ENCODE measurements at regions of chr4 and their contacts with region 1.

Region 1: DNA sequence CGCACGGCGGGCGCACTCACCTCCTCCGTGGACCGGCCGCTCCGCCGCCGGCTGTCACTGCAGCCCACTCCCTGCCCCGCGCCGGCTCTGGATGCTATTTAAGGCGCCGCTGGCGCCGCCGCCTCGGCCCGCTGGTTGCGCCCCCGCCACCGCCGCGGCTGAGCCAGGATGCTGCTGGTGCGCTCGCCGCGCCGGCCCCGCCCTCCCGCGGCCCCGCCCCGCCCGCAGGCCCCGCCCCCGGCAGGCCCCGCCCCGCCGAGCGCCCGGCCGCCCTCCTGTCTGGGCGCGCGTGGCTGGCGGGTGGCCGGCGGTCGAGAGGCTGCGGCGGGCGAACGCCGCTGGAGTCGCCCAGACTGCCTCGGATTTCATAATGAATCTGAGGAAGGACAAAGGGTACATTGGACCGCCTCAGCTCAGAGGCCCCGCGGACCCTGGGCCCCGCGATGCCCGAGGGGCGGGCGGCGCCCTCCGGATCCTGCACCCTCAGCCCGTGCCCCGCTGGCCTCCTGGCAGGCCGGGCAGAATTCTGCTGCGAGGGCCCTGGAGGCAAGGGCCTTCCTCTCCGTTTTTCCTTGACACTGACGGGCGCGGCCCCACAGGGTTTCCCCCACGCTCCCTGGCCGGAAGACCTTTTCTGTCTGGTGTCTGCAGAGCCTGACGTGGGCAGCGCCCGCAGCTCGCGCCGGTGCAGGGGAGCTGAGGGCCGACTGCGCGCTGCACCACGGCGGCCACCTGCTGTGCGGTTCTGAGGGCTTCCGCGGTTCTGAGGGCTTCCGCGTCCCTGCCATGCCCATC is at the start of gene ACSL1:
- DNase-seq: peak; percentile 63 to 83 (median 75)
- ATAC-seq: peak; percentile 95
- H3K4me3 ChIP-seq: peak within 1 kb of the TSS; percentile 59
- H3K4me3 Mint-ChIP-seq: peak within 1 kb of the TSS; percentile 89 to 94 (median 91)
- H3K27ac ChIP-seq: peak within 1 kb of the TSS; percentile 73
- H3K27ac Mint-ChIP-seq: peak within 1 kb of the TSS; percentile 79 to 91 (median 90)
- H3K4me1 ChIP-seq: peaks cover 4 to 7% of the 10 kb centered on the region in 2 donors
- H3K4me1 Mint-ChIP-seq: peaks cover 21 to 46% (median 33%) of the 10 kb centered on the region in 7 donors
- H3K27me3 ChIP-seq: no peaks in the 10 kb centered on the region
- H3K27me3 Mint-ChIP-seq: peaks cover 0 to 25% (median 0%) of the 10 kb centered on the region in 5 donors
- total RNA-seq, gene ACSL1: 9.5 to 80.1 (median 20.4) TPM

Region 2: DNA sequence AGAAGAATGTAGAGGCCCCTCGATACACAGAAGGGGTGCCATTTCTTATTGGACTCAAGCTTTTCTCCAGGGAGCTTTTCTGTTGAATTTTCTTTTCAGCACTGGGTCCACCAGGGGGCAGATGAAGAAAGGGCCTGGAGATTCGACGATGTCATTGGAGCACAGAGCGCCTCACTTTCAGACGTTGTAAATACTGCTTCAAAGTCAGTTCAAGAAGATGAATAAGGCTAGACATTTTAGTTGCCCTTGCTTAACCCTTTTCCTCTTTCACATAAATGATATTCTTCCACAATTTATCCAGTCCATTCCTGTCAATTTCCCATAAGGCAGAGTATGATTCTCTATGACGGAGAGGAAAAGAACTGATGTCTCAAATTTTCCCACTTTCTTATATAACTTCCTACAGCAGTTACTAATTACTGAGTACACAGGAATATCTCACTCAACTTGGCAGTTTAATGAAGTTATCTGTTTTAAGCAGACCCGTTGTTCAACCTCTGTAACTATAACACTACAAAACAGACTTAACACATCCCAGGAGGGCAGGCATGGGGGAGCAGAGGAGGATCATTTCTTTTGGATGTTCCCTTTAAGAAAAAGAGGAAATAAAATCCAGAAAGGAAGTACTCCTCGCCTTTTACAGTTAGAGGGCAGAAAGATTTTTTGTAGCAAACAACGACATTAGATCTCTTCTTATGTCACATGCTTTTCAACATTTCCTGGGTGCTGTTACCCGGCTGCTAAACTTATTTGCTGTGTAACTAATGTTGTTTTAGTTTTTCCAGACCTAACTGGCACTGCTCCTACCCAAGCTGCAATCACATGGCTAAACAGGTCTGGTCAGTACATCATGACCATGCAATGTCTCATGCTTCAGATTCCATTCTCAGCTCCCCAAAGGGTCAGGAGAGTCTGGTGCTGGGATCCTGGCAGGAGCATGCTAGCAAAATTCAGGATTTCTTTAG is 80.0 kb before region 1 on chr4:
- CTCF ChIA-PET with region 1: no interaction called
- POLR2A ChIA-PET with region 1: no interaction called
- intact Hi-C with region 1: loop called (anchors 1 to 2 kb)
- DNase-seq: peak; percentile 37 to 82 (median 76)
- ATAC-seq: peak; percentile 93
- H3K4me3 ChIP-seq: no peak overlapping the region
- H3K4me3 Mint-ChIP-seq: peak overlapping the region; percentile 18 to 73 (median 54)
- H3K27ac ChIP-seq: peak overlapping the region; percentile 30
- H3K27ac Mint-ChIP-seq: peak overlapping the region; percentile 58 to 90 (median 88)
- H3K4me1 ChIP-seq: peaks cover 0 to 14% of the 10 kb centered on the region in 2 donors
- H3K4me1 Mint-ChIP-seq: peaks cover 16 to 20% (median 18%) of the 10 kb centered on the region in 7 donors
- H3K27me3 ChIP-seq: no peaks in the 10 kb centered on the region
- H3K27me3 Mint-ChIP-seq: peaks cover 0 to 3% (median 0%) of the 10 kb centered on the region in 5 donors

Region 3: DNA sequence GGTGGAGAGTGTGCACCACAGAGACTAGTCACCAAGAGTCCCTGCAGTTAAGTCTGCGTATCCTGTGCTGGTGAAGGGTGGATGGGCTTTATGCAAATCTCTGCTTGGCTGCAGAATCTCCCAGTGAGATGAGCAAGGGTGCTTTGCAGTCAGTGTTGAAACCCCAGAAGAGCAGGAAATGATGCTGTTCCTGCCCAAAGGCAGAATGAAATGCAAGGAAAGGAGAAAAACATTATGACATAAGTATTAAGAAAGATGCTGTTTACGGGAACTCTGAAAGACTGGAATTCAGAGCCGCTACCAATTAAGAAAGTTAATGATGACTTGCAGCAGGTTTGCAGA is 25.1 kb after region 1 on chr4:
- CTCF ChIA-PET with region 1: no interaction called
- POLR2A ChIA-PET with region 1: no interaction called
- intact Hi-C with region 1: loop called in 1 of 2 experiments (anchors 2 kb)
- DNase-seq: peak in 2 of 9 donors; percentile 0 to 20
- ATAC-seq: peak; percentile 72
- H3K4me3 ChIP-seq: no peak overlapping the region
- H3K4me3 Mint-ChIP-seq: no peak overlapping the region
- H3K27ac ChIP-seq: no peak overlapping the region
- H3K27ac Mint-ChIP-seq: no peak overlapping the region
- H3K4me1 ChIP-seq: peaks cover 0 to 3% of the 10 kb centered on the region in 2 donors
- H3K4me1 Mint-ChIP-seq: peaks cover 10 to 33% (median 13%) of the 10 kb centered on the region in 7 donors
- H3K27me3 ChIP-seq: no peaks in the 10 kb centered on the region
- H3K27me3 Mint-ChIP-seq: peaks cover 0 to 12% (median 0%) of the 10 kb centered on the region in 5 donors

Region 4: DNA sequence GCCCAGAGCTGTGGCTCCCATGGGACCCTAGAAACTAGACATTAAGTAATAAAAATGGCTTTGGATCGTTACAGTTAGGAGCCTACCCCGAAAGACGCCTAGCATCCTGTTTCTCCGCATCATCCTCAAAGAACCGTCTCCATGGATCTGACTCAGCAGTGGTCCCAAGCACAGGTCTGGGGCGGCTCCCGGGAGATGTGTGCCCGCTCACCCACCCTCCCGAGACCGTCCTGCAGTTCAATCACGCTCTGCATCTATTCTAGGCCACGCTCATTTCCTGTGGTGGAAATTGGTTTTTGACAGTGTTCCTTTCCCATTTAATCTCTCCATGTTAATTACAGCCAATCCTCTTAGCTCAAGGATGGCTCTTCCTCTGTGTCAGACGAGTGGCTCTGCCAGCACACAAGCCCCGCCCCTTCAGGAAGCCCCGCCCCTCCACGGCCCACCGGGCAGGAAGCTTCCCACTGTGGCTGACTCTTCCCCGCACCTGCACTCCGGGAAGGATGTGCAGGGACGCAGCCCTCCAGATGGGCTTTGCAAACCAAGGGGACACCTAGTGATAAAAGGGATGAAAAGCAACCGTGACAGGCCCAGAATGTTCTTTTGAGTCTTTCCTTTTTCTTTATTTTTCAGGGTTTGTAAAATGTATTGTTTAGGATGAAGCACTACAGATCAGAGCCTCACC is 157.7 kb after region 1 on chr4:
- CTCF ChIA-PET with region 1: no interaction called
- POLR2A ChIA-PET with region 1: no interaction called
- intact Hi-C with region 1: loop called in 1 of 2 experiments (anchors 2 kb)
- DNase-seq: peak in 6 of 9 donors; percentile 37 to 56 (median 48)
- ATAC-seq: peak; percentile 60
- H3K4me3 ChIP-seq: peak overlapping the region; percentile 50
- H3K4me3 Mint-ChIP-seq: no peak overlapping the region
- H3K27ac ChIP-seq: no peak overlapping the region
- H3K27ac Mint-ChIP-seq: no peak overlapping the region
- H3K4me1 ChIP-seq: peaks cover 15 to 17% of the 10 kb centered on the region in 2 donors
- H3K4me1 Mint-ChIP-seq: peaks cover 0 to 2% (median 0%) of the 10 kb centered on the region in 7 donors
- H3K27me3 ChIP-seq: no peaks in the 10 kb centered on the region
- H3K27me3 Mint-ChIP-seq: peaks cover 0 to 6% (median 0%) of the 10 kb centered on the region in 5 donors

Region 5: GRCh38 chr4:185082561-185082960 is 256.5 kb after region 1 on chr4:
- CTCF ChIA-PET with region 1: no interaction called
- POLR2A ChIA-PET with region 1: no interaction called
- intact Hi-C with region 1: no loop called
- DNase-seq: no peak
- ATAC-seq: no peak
- H3K4me3 ChIP-seq: no peak overlapping the region
- H3K4me3 Mint-ChIP-seq: no peak overlapping the region
- H3K27ac ChIP-seq: no peak overlapping the region
- H3K27ac Mint-ChIP-seq: no peak overlapping the region
- H3K4me1 ChIP-seq: no peaks in the 10 kb centered on the region
- H3K4me1 Mint-ChIP-seq: peaks cover 0 to 2% (median 0%) of the 10 kb centered on the region in 7 donors
- H3K27me3 ChIP-seq: no peaks in the 10 kb centered on the region
- H3K27me3 Mint-ChIP-seq: peaks cover 0 to 41% (median 12%) of the 10 kb centered on the region in 5 donors

Region 6: GRCh38 chr4:185209031-185209851 is 383.1 kb after region 1 on chr4 and contains the start of gene SNX25:
- CTCF ChIA-PET with region 1: no interaction called
- POLR2A ChIA-PET with region 1: no interaction called
- intact Hi-C with region 1: loop called in 1 of 2 experiments (anchors 5 kb)
- DNase-seq: peak; percentile 77 to 93 (median 83)
- ATAC-seq: peak; percentile 96
- H3K4me3 ChIP-seq: peak within 1 kb of the TSS; percentile 81
- H3K4me3 Mint-ChIP-seq: peak within 1 kb of the TSS; percentile 87 to 95 (median 93)
- H3K27ac ChIP-seq: peak within 1 kb of the TSS; percentile 39
- H3K27ac Mint-ChIP-seq: peak within 1 kb of the TSS; percentile 82 to 93 (median 91)
- H3K4me1 ChIP-seq: peaks cover 27 to 28% of the 10 kb centered on the region in 2 donors
- H3K4me1 Mint-ChIP-seq: peaks cover 31 to 56% (median 47%) of the 10 kb centered on the region in 7 donors
- H3K27me3 ChIP-seq: no peaks in the 10 kb centered on the region
- H3K27me3 Mint-ChIP-seq: peaks cover 0 to 15% (median 0%) of the 10 kb centered on the region in 5 donors
- total RNA-seq, gene SNX25: 8.0 to 18.9 (median 14.3) TPM

Region 7: GRCh38 chr4:185471235-185472102 is 645.4 kb after region 1 on chr4 and contains the start of gene CCDC110:
- CTCF ChIA-PET with region 1: no interaction called
- POLR2A ChIA-PET with region 1: no interaction called
- intact Hi-C with region 1: loop called (anchors 1 to 2 kb)
- DNase-seq: peak; percentile 72 to 89 (median 86)
- ATAC-seq: peak; percentile 99
- H3K4me3 ChIP-seq: peak within 1 kb of the TSS; percentile 61
- H3K4me3 Mint-ChIP-seq: peak within 1 kb of the TSS; percentile 87 to 98 (median 92)
- H3K27ac ChIP-seq: peak within 1 kb of the TSS; percentile 65
- H3K27ac Mint-ChIP-seq: peak within 1 kb of the TSS; percentile 5 to 90 (median 86)
- H3K4me1 ChIP-seq: peaks cover 0 to 3% of the 10 kb centered on the region in 2 donors
- H3K4me1 Mint-ChIP-seq: peaks cover 5 to 18% (median 9%) of the 10 kb centered on the region in 7 donors
- H3K27me3 ChIP-seq: no peaks in the 10 kb centered on the region
- H3K27me3 Mint-ChIP-seq: peaks cover 0 to 52% (median 6%) of the 10 kb centered on the region in 5 donors
- total RNA-seq, gene CCDC110: 0.42 to 1.8 (median 0.76) TPM in 4 of 5 experiments, not detected in the other

Measured in naive thymus-derived CD4-positive, alpha-beta T cell (primary cell).